IMR-90 (cell line): ENCODE measurements at regions of chr11 and their contacts with region 1.

Region 1: GRCh38 chr11:31757260-31757835 is 53.8 kb downstream of the PAX6 start:
- DNase-seq: no peak
- ATAC-seq: no peak
- H3K4me3 ChIP-seq: no peak overlapping the region
- H3K27ac ChIP-seq: no peak overlapping the region
- H3K4me1 ChIP-seq: no peaks in the 10 kb centered on the region
- H3K27me3 ChIP-seq: no peaks in the 10 kb centered on the region
- CTCF ChIP-seq: no peak
- POLR2A ChIP-seq: no peak
- RAD21 ChIP-seq: no peak

Region 2: GRCh38 chr11:31974366-31975136 is 217.2 kb after region 1 on chr11:
- CTCF ChIA-PET with region 1: no interaction called
- POLR2A ChIA-PET with region 1: interaction called, 10 read pairs
- dilution Hi-C with region 1: no loop called
- in situ Hi-C with region 1: no loop called
- intact Hi-C with region 1: no loop called
- DNase-seq: peak; percentile 81
- ATAC-seq: peak; percentile 27; the same call in 1 of the 2 replicates
- H3K4me3 ChIP-seq: no peak overlapping the region
- H3K27ac ChIP-seq: no peak overlapping the region
- H3K4me1 ChIP-seq: no peaks in the 10 kb centered on the region; the same call in 1 of the 2 replicates
- H3K27me3 ChIP-seq: peaks cover 25% of the 10 kb centered on the region
- CTCF ChIP-seq: no peak
- POLR2A ChIP-seq: no peak
- RAD21 ChIP-seq: no peak

Region 3: DNA sequence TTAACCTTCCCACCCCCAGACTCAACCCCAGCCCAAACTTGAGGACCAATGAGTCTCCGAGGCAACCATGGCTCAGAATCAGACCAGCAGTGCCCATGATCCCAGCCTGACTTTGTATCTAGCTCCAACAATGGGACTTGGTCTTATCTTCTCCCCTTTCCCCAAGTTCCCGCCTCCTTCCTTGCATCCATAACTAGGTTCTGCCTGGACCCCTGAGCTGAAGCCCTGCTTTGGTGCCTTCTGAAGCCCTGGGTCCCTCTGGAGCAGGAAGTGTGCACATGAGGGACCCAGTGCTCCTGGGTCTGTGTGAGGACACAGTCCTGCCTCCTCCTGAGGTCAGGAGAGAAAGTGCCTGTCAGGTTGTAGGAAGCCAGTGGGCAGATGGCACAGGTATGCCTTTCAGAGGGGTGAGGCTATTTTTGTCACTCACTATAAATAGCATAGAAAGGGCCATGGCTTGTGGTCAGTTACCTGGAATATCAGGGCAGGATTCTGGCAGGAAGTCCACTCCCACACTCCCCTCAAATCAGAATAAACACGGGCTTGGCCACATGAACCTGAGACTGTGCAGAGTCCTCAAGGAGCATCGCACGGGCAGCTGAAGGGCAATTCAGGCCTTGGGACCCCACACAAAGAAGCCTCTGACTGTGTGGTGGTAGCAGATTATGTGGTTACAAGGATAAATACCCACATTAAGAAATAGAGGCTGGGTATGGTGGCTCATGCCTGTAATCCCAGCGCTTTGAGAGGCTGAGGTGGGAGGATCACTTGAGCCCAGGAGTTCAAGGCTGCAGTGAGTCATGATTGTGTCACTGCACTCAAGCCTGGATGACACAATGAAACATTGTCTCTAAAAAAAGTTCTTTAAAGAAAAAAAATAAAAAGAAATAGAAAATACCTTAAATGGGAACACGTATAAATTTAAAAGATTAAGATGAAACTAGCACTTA is 361.0 kb after region 1 on chr11:
- CTCF ChIA-PET with region 1: no interaction called
- POLR2A ChIA-PET with region 1: no interaction called
- dilution Hi-C with region 1: no loop called
- in situ Hi-C with region 1: no loop called
- intact Hi-C with region 1: no loop called
- DNase-seq: peak; percentile 80
- ATAC-seq: peak; percentile 73
- H3K4me3 ChIP-seq: no peak overlapping the region
- H3K27ac ChIP-seq: no peak overlapping the region
- H3K4me1 ChIP-seq: peaks cover 5% of the 10 kb centered on the region; the same call in 1 of the 2 replicates
- H3K27me3 ChIP-seq: peaks cover 2% of the 10 kb centered on the region; the same call in 1 of the 2 replicates
- CTCF ChIP-seq: no peak
- POLR2A ChIP-seq: no peak
- RAD21 ChIP-seq: no peak